ENCODE measurements at regions of chr11 and their contacts with region 1.

Region 1: GRCh38 chr11:104164028-104164520 is at the start of gene PDGFD:
- DNase-seq: peak; percentile 87
- H3K4me3 ChIP-seq: peak within 1 kb of the TSS; percentile 73
- H3K27ac ChIP-seq: peak within 1 kb of the TSS; percentile 33
- H3K4me1 ChIP-seq: peaks cover 19% of the 10 kb centered on the region
- CTCF ChIP-seq: peak; percentile 56; the same call in 1 of the 2 replicates
- total RNA-seq, gene PDGFD: 0.98 and 1.0 TPM in 2 replicates

Region 2: GRCh38 chr11:103875855-103876510 is 288.1 kb before region 1 on chr11:
- CTCF ChIA-PET with region 1: no interaction called
- POLR2A ChIA-PET with region 1: interaction called, 3 read pairs
- intact Hi-C with region 1: loop called (anchors 5 kb)
- DNase-seq: peak; percentile 70
- H3K4me3 ChIP-seq: no peak overlapping the region
- H3K27ac ChIP-seq: peak overlapping the region; percentile 47
- H3K4me1 ChIP-seq: peaks cover 23% of the 10 kb centered on the region
- CTCF ChIP-seq: no peak

Region 3: GRCh38 chr11:103903621-103904323 is 260.3 kb before region 1 on chr11:
- CTCF ChIA-PET with region 1: interaction called, 7 read pairs
- POLR2A ChIA-PET with region 1: interaction called, 20 read pairs
- intact Hi-C with region 1: loop called (anchors 2 kb)
- DNase-seq: peak; percentile 81
- H3K4me3 ChIP-seq: peak overlapping the region; percentile 62
- H3K27ac ChIP-seq: peak overlapping the region; percentile 90
- H3K4me1 ChIP-seq: peaks cover 85% of the 10 kb centered on the region
- CTCF ChIP-seq: no peak

Region 4: GRCh38 chr11:103927535-103927934 is 236.5 kb before region 1 on chr11:
- CTCF ChIA-PET with region 1: interaction called, 4 read pairs
- POLR2A ChIA-PET with region 1: interaction called, 14 read pairs
- intact Hi-C with region 1: loop called (anchors 1 kb)
- DNase-seq: peak; percentile 28
- H3K4me3 ChIP-seq: no peak overlapping the region
- H3K27ac ChIP-seq: no peak overlapping the region
- H3K4me1 ChIP-seq: peaks cover 20% of the 10 kb centered on the region
- CTCF ChIP-seq: peak; percentile 75

Region 5: DNA sequence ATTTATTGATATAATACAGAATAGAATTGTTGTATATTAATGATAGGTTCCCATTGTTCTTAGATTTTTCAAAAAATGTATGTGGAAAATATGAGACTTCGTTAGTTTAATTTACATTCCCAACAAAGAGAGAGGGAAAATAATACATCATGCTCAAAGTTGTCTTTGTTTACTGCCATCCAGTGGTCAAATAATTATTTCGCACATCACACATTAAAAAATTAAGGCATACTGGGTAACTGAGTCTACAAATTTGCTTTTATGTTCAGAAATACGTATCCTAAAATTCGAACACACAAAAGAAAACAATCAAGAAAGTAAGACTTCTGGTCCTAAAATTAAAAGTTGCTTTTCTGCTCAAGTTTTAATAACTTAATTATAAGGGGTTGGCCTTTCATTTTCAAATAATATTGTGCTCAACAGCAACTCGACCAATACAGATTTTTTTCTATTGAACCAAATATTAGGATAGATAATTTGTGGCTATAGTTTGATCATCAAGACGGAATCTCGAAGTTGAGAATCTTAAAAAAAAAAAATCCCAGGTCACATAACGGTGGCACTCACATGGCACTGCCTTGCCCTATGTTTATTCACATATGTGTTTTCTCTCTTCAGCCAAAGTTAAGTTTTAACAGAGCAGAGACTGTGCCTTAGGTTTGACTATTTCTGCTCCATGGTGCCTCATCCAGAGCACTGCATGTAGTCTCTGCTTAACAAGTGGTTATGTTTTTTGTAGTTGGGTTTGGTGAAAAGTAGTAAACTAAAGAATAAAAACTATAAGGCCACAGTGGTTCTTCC is 12.5 kb before region 1 on chr11:
- CTCF ChIA-PET with region 1: interaction called, 9 read pairs
- POLR2A ChIA-PET with region 1: interaction called, 28 read pairs
- intact Hi-C with region 1: no loop called
- DNase-seq: peak; percentile 38
- H3K4me3 ChIP-seq: no peak overlapping the region
- H3K27ac ChIP-seq: no peak overlapping the region
- H3K4me1 ChIP-seq: peaks cover 21% of the 10 kb centered on the region
- CTCF ChIP-seq: peak; percentile 82